Calu3 (cell line): ENCODE measurements at regions of chr4 and their contacts with region 1.

Region 1: DNA sequence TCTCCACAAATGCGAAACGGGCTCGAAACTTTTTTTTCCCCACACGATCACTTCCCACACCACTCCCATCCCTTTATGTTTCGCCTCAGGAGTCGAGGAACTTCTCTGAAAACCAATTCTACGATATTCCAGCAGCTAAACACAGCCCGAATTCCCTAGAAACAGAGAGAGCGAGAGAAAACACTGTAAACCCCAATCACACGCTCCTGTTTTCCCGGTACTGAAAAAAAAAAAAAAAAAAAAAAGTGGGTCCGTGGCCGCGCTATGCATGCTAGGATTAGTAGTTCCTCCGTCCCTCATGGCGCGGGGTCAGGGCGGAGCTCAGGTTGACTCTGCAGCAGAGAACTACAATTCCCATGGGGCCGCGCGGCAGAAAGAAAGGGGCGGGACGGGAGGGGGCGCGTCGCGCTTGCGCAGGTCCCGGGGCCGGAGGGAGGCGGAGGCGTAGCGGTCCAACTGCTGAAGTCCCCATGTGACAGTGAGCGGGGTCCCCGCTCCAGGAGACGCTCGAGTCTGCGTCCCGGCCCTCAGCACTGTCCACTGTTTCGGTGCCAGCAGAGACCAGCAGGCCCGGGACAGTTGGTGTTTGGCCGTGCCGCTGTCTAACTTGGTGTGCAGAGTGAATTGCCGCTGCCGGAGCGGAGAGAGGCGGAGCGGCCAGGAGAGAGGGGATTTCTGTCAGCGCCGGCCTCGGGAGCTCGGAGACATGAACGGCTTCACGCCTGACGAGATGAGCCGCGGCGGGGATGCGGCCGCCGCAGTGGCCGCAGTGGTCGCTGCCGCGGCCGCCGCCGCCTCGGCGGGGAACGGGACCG is at the start of gene SAP30:
- DNase-seq: peak; percentile 91
- H3K4me3 Mint-ChIP-seq: peak within 1 kb of the TSS; percentile 87
- H3K27ac Mint-ChIP-seq: peak within 1 kb of the TSS; percentile 26
- H3K4me1 Mint-ChIP-seq: peaks cover 9% of the 10 kb centered on the region
- H3K27me3 Mint-ChIP-seq: no peaks in the 10 kb centered on the region
- CTCF ChIP-seq: no peak
- total RNA-seq, gene SAP30: 10.6 and 12.7 TPM in 2 replicates

Region 2: DNA sequence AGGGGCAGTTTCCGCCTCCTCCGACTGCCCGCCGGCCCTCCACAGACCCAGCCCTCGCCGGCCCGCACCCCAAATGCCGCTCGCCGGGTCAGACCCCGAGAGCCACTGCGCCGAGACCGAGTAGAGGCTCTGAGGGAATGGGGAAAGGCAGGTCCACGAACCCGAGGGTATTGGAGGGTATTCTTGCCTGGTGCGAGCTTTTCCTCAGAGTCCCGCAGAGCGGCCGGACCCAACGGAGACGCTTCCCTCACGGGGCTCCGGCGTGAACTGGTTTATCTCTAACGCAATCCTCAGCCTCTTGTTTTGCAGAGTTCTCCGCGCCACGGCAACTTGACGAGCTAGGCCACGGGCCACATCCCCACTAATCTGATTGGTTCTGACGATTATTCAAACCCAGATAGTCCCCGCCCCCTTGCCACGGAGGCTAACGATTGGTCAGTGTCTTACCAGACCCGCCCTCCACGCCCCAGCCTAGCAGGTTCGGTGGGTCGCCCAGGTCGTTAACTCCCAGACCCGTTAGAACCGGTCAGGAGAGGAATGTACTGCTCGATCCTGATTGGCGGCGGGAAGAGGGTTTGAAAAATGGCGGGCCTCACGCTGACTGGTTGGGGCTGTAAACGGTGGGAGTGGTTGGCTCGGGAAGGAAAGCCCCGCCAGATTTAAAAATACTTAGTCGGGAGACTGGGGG is 36.5 kb before region 1 on chr4 and contains the start of gene HMGB2:
- CTCF ChIA-PET with region 1: interaction called, 12 read pairs
- intact Hi-C with region 1: loop called (anchors 2 kb)
- DNase-seq: peak; percentile 98
- H3K4me3 Mint-ChIP-seq: peak within 1 kb of the TSS; percentile 93
- H3K27ac Mint-ChIP-seq: peak within 1 kb of the TSS; percentile 60
- H3K4me1 Mint-ChIP-seq: peaks cover 19% of the 10 kb centered on the region
- H3K27me3 Mint-ChIP-seq: no peaks in the 10 kb centered on the region
- CTCF ChIP-seq: no peak
- total RNA-seq, gene HMGB2: 108 and 128 TPM in 2 replicates

Region 3: GRCh38 chr4:173413036-173413435 is 42.4 kb after region 1 on chr4:
- CTCF ChIA-PET with region 1: interaction called, 3 read pairs
- intact Hi-C with region 1: loop called (anchors 5 kb)
- DNase-seq: no peak
- H3K4me3 Mint-ChIP-seq: no peak overlapping the region
- H3K27ac Mint-ChIP-seq: no peak overlapping the region
- H3K4me1 Mint-ChIP-seq: no peaks in the 10 kb centered on the region
- H3K27me3 Mint-ChIP-seq: no peaks in the 10 kb centered on the region
- CTCF ChIP-seq: no peak